ENCODE measurements at regions of chr20 and their contacts with region 1.

Region 1: DNA sequence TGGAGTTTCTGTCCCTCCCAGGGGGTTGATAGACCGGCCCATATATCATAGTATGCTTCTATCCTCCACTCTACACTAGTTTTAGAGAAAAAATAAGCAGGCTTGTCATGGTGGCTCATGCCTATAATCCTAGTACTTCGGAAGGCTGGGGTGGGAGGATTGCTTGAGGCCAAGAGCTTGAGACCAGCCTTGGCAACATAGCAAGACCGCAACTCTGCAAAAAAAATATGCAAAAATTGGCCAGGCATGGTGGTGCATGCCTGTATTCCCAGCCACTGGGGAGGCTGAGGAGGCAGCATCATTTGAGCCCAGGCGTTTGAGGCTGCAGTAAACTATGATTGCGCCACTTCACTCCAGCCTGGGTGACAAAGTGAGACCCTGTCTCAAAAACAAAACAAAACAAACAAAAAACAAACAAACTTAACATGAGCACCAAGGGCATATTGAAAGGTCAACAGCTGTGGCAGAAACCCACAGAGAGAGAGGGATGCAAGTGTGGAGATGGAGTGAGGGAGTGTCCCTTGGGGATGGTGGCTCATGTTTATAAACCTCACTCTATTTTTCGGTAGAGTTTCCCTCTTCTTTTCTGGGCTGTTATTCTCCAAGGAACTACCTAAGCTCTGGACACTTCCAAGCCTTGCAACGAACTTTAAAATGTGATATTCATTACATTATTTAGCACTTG is 24.1 kb downstream of the SLC24A3 start:
- DNase-seq: no peak
- ATAC-seq: peak; percentile 56

Region 2: GRCh38 chr20:19254978-19255377 is 18.5 kb after region 1 on chr20:
- intact Hi-C with region 1: loop called (anchors 1 kb)
- DNase-seq: no peak
- ATAC-seq: no peak

Region 3: GRCh38 chr20:19284400-19285178 is 48.1 kb after region 1 on chr20:
- intact Hi-C with region 1: no loop called
- DNase-seq: no peak
- ATAC-seq: peak; percentile 6

Measured in sciatic nerve (tissue), 2 donors.